K562 (cell line): ENCODE measurements at regions of chr3 and their contacts with region 1.

Region 1: DNA sequence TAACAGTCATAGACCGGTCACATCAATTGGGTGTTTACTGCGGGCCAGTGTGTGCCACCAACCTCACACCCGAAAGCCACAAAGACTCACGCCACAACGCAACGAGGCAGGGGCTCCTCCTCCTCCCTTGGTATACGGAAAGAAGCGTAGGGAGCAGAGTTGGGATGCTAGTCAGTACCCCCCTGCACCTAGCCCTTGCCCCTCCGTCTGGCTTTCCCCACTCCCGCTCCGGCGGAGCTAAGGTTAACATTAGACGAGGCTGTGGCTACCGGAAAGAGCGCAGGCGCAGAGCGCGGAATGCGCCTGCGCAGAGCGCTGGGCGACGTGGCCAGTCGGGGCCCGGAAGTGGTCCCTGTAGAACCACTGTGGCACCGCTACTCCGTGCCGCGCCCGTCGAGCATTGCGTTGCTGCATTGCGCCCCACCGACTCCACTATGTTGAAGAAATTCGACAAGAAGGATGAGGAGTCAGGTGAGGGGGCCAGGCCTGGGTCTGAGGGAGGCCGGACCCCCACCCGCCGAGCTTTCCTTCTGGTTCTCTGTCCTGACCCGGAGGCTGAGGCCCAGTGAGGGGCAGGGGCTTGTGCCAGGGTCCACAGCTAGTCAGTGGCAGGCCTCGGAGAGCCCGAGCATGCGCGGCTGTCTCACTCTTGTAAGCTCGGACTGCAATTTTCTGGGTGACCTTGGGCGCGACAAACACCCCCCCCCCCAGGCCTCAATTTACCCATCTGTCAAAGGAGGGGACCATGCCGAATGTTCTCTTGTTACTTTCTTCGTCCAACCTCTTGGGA is at the start of gene COPG1:
- DNase-seq: peak; percentile 89 to 93 (median 92)
- ATAC-seq: peak; percentile 90
- H3K4me3 ChIP-seq: peak within 1 kb of the TSS; percentile 92
- H3K27ac ChIP-seq: peak within 1 kb of the TSS; percentile 96
- H3K4me1 ChIP-seq: peaks cover 10 to 17% of the 10 kb centered on the region in 2 experiments; a peak in 3 of 5 replicates
- H3K27me3 ChIP-seq: no peaks in the 10 kb centered on the region
- CTCF ChIP-seq: no peak
- EP300 ChIP-seq: peak; percentile 13; the same call in 1 of the 2 replicates
- POLR2A ChIP-seq: peak; percentile 92
- RAD21 ChIP-seq: no peak
- polyA plus RNA-seq, gene COPG1: 40.6 to 105 TPM

Region 2: DNA sequence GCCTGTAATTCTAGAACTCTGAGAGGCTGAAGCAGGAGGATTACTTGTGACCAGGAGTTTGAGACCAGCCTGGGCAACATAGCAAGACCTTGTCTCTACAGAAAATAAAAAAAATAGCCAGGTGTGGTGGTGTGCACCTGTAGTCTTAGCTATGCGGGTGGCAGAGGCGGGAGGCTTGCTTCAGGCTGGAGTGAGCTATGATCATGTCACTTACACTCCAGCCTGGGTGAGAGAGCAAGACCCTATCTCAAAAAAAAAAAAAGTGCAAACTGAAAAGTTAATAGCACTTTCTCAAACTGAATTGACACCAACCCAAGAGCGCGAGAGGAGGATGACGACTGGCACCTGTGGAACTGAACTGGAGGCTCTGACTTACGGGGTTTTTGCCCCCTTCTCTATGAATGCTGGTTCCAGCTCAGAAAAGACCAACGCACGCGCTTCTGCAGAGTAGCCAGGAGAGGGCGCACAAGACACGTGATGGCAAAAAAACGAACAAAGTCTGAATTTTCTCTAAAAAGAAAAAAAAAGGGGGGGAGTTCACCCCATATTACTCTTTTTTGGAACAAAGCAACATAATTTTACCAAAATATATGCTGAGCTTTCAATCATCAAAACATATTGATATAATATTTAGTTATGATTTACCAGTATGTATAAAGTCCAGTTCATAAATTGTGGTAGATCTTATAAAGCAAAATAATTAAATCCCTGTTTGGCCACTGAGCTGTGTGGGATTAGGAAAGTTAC is 279.3 kb before region 1 on chr3:
- CTCF ChIA-PET with region 1: interaction called, 4 read pairs
- POLR2A ChIA-PET with region 1: interaction called, 7 read pairs
- in situ Hi-C with region 1: no loop called
- intact Hi-C with region 1: loop called (anchors 2 kb)
- DNase-seq: peak; percentile 35 to 59 (median 48)
- ATAC-seq: peak; percentile 79
- H3K4me3 ChIP-seq: no peak overlapping the region
- H3K27ac ChIP-seq: no peak overlapping the region
- H3K4me1 ChIP-seq: no peaks in the 10 kb centered on the region; a peak in 2 of 5 replicates
- H3K27me3 ChIP-seq: peaks cover 0 to 19% of the 10 kb centered on the region in 2 experiments; a peak in 2 of 5 replicates
- CTCF ChIP-seq: peak; percentile 74 to 83 (median 82)
- EP300 ChIP-seq: no peak
- POLR2A ChIP-seq: no peak
- RAD21 ChIP-seq: peak; percentile 73 to 80

Region 3: DNA sequence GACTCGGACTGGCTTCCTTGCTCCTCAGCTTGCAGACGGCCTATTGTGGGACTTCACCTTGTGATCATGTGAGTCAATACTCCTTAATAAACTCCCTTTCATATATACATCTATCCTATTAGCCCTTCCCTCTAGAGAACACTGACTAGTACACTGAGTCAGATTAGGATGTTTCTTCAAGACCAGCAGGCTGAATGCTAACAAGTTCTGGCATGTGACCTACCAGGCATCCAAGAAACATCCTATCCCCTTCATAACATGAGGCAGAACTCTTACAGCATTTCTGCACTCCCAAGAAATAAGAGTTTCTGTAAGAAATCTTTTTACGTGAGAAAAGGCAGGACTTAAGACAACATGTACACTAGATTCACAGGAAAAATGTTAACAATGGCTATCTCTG is 264.9 kb before region 1 on chr3:
- CTCF ChIA-PET with region 1: no interaction called
- POLR2A ChIA-PET with region 1: no interaction called
- in situ Hi-C with region 1: loop called (anchors 10 kb)
- intact Hi-C with region 1: no loop called
- DNase-seq: no peak
- ATAC-seq: no peak
- H3K4me3 ChIP-seq: no peak overlapping the region
- H3K27ac ChIP-seq: no peak overlapping the region
- H3K4me1 ChIP-seq: no peaks in the 10 kb centered on the region; a peak in 1 of 5 replicates
- H3K27me3 ChIP-seq: no peaks in the 10 kb centered on the region
- CTCF ChIP-seq: no peak
- EP300 ChIP-seq: no peak
- POLR2A ChIP-seq: no peak
- RAD21 ChIP-seq: no peak

Region 4: GRCh38 chr3:129160891-129161859 is 88.3 kb before region 1 on chr3 and contains the start of gene ISY1:
- CTCF ChIA-PET with region 1: interaction called, 10 read pairs
- POLR2A ChIA-PET with region 1: interaction called, 21 read pairs
- in situ Hi-C with region 1: no loop called
- intact Hi-C with region 1: no loop called
- DNase-seq: peak; percentile 75 to 93 (median 83)
- ATAC-seq: peak; percentile 84
- H3K4me3 ChIP-seq: peak within 1 kb of the TSS; percentile 67
- H3K27ac ChIP-seq: peak within 1 kb of the TSS; percentile 100
- H3K4me1 ChIP-seq: peaks cover 0 to 11% of the 10 kb centered on the region in 2 experiments; a peak in 3 of 5 replicates
- H3K27me3 ChIP-seq: no peaks in the 10 kb centered on the region
- CTCF ChIP-seq: peak; percentile 75 to 82 (median 81)
- EP300 ChIP-seq: no peak
- POLR2A ChIP-seq: peak; percentile 93
- RAD21 ChIP-seq: peak in 1 of 2 experiments; percentile 37; a peak in 3 of 4 replicates
- polyA plus RNA-seq, gene ISY1: 41.9 to 50.0 TPM